Posterior vena cava (tissue), 2 donors: ENCODE measurements at regions of chr2 and their contacts with region 1.

Region 1: DNA sequence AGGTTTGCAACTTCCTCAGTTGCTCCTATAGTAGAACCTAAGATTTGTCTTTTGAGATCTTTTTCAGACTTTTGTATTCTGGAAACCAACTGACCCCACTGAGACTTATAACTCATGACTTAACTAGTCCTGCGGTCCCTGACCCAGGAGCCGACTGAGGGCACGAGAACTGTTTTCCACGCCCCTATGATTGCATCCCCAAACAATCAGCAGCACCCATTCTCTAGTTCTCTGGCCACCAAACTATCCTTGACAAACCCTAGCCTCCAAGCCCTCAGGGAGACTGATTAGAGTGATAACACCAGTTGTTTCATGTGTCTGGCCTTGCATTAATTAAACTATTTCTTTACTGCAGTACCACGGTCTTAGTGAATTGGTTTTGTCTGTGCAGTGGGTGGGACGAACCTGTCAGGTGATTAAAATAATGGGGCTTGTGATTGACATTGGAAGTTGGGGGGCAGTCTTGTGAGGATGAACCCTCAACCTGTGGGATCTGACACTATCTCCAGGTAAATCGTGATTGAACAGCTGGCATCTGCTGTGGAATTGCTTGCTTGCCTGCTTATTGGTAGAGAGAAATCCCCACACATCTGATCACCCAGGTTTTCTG is 95.7 kb downstream of the B3GNT2 start:
- DNase-seq: no peak

Region 2: GRCh38 chr2:62227386-62228075 is 64.1 kb before region 1 on chr2:
- intact Hi-C with region 1: loop called in 1 of 2 experiments (anchors 2 kb)
- DNase-seq: no peak

Region 3: GRCh38 chr2:62325398-62325797 is 33.8 kb after region 1 on chr2:
- intact Hi-C with region 1: no loop called
- DNase-seq: no peak